ENCODE measurements at regions of chr11 and their contacts with region 1.

Region 1: GRCh38 chr11:122628810-122629555 is 26.5 kb upstream of the UBASH3B start:
- DNase-seq: peak; percentile 74
- H3K27ac ChIP-seq: no peak overlapping the region
- CTCF ChIP-seq: peak; percentile 83

Region 2: GRCh38 chr11:122781378-122782195 is 152.6 kb after region 1 on chr11:
- CTCF ChIA-PET with region 1: interaction called, 18 read pairs
- POLR2A ChIA-PET with region 1: no interaction called
- DNase-seq: peak; percentile 85
- H3K27ac ChIP-seq: no peak overlapping the region
- CTCF ChIP-seq: peak; percentile 90